Heart right ventricle (tissue), 16 donors: ENCODE measurements at regions of chr16 and their contacts with region 1.

Region 1: DNA sequence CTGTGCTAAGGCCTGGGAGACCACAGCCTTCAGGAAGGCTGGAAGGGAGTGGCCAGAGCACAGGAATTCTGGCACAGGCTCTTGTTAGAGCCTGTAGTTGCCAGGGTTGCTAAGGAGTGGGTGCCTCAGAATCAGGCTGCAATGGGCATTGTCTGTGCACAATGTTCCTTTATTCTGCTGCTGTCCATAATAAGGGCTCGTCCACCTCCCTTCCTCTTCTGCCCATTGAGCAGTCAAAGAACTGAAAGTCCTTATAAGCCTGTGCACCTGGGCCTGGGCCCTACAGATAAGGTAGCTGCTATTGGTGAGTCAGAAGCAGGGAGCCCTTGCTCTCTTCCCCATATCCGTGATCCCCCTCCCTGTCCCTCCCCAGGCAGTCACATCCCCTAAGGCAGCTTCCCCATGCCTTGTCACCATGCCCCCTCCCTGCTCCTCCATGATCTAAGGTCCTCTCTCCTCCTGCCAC is 5.4 kb upstream of the CNGB1 start:
- DNase-seq: no peak
- ATAC-seq: peak; percentile 55 to 96 (median 85)
- H3K4me3 ChIP-seq: no peak overlapping the region
- H3K27ac ChIP-seq: peak overlapping the region in 2 of 10 donors; percentile 23 to 61
- H3K4me1 ChIP-seq: peaks cover 0 to 8% (median 0%) of the 10 kb centered on the region in 9 donors
- H3K27me3 ChIP-seq: no peaks in the 10 kb centered on the region
- CTCF ChIP-seq: no peak

Region 2: DNA sequence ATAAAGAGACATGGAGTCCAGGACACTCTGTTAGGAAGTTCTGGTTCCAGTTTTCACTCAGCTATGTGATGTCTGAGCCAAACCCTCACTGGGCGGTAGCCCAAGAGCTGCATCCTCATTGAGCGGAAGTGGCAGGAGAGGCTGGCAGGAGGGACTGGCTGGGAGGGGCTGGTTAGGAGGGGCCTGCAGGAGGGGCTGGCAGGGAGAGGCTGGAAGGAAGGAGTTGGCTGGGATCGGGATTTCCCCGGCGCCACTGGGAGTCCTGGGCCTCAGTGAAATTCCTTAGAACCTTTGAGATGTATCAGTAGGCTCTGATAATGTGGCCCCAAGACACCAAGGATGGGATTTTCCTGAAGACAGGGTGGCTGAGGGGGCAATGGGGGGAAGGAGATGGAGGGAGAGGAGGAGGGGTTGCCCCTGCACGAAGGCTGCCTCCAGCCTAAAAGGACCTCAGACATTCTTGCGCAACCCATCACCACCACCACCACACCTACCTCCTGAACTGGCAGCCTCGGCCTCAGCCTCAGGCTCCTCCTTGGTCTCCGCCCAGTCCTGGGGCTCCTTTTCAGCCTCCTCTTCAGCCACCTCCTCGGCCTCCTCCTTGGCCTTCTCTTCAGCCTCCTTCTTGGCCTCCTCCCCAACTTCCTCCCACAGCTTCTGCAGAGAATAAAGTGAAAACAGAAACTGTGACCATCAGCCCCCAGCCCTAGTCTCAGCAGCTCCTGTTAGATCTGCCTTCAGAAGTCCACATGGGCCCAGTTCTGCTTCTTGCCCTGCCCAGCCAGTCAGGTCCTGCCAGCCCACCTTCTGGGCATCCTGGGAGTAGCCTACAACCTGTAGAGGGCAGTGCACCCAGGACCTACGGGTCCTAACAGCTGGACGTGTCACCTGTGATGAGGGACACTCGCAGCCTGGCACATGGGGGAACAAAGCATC is 37.2 kb before region 1 on chr16:
- intact Hi-C with region 1: loop called in 1 of 10 experiments (anchors 5 kb)
- DNase-seq: peak; percentile 71 to 78
- ATAC-seq: peak; percentile 85 to 94 (median 89)
- H3K4me3 ChIP-seq: no peak overlapping the region
- H3K27ac ChIP-seq: peak overlapping the region in 7 of 10 donors; percentile 56 to 82 (median 69)
- H3K4me1 ChIP-seq: peaks cover 0 to 33% (median 13%) of the 10 kb centered on the region in 9 donors
- H3K27me3 ChIP-seq: peaks cover 0 to 7% (median 0%) of the 10 kb centered on the region in 7 donors
- CTCF ChIP-seq: peak in 1 of 9 donors; percentile 10